ENCODE measurements at regions of chr14 and their contacts with region 1.

Region 1: GRCh38 chr14:61456720-61457119 is 135.3 kb downstream of the PRKCH start:
- DNase-seq: peak; percentile 89
- ATAC-seq: peak; percentile 87
- H3K4me3 ChIP-seq: no peak overlapping the region
- H3K4me3 Mint-ChIP-seq: no peak overlapping the region
- H3K27ac ChIP-seq: no peak overlapping the region
- H3K27ac Mint-ChIP-seq: no peak overlapping the region
- H3K4me1 ChIP-seq: peaks cover 4 to 11% of the 10 kb centered on the region in 2 donors
- H3K4me1 Mint-ChIP-seq: peaks cover 13% of the 10 kb centered on the region
- H3K27me3 ChIP-seq: no peaks in the 10 kb centered on the region
- H3K27me3 Mint-ChIP-seq: no peaks in the 10 kb centered on the region
- CTCF ChIP-seq: peak; percentile 89

Region 2: GRCh38 chr14:61296719-61297502 is 159.8 kb before region 1 on chr14:
- CTCF ChIA-PET with region 1: no interaction called
- POLR2A ChIA-PET with region 1: no interaction called
- intact Hi-C with region 1: loop called (anchors 1 kb)
- DNase-seq: peak; percentile 36
- ATAC-seq: no peak
- H3K4me3 ChIP-seq: no peak overlapping the region
- H3K4me3 Mint-ChIP-seq: no peak overlapping the region
- H3K27ac ChIP-seq: no peak overlapping the region
- H3K27ac Mint-ChIP-seq: no peak overlapping the region
- H3K4me1 ChIP-seq: no peaks in the 10 kb centered on the region
- H3K4me1 Mint-ChIP-seq: no peaks in the 10 kb centered on the region
- H3K27me3 ChIP-seq: no peaks in the 10 kb centered on the region
- H3K27me3 Mint-ChIP-seq: peaks cover 10% of the 10 kb centered on the region
- CTCF ChIP-seq: peak; percentile 73